ENCODE measurements at regions of chr7 and their contacts with region 1.

Region 1: DNA sequence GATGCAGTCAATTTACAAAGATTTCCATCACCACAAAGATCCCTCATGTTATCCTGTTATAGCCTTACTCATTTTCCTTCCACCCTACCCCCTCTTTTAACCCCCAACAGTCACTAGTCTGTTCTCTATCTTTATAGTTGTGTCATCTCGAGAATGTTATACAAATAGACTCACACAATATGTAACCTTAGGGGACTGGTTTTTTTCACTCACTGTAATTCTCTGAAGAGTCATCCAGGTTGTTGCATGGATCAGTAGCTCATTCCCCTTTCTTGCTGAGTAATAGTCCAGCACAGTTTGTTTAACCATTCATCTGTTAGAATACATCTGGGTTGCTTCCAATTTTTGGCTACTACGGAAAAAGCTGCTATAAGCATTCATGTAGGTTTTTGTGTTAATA is 121.1 kb upstream of the PDE1C start:
- DNase-seq: no peak
- H3K4me3 ChIP-seq: no peak overlapping the region
- H3K27ac ChIP-seq: no peak overlapping the region
- H3K4me1 ChIP-seq: no peaks in the 10 kb centered on the region
- H3K27me3 ChIP-seq: no peaks in the 10 kb centered on the region
- CTCF ChIP-seq: no peak
- EP300 ChIP-seq: no peak
- POLR2A ChIP-seq: no peak

Region 2: GRCh38 chr7:32179567-32179966 is 11.7 kb before region 1 on chr7:
- intact Hi-C with region 1: loop called in 1 of 4 experiments (anchors 2 kb)
- DNase-seq: no peak
- H3K4me3 ChIP-seq: no peak overlapping the region
- H3K27ac ChIP-seq: no peak overlapping the region
- H3K4me1 ChIP-seq: no peaks in the 10 kb centered on the region
- H3K27me3 ChIP-seq: no peaks in the 10 kb centered on the region
- CTCF ChIP-seq: no peak
- EP300 ChIP-seq: no peak
- POLR2A ChIP-seq: no peak

Measured in ovary (tissue), 10 donors.